ENCODE measurements at regions of chr1 and their contacts with region 1.

Region 1: DNA sequence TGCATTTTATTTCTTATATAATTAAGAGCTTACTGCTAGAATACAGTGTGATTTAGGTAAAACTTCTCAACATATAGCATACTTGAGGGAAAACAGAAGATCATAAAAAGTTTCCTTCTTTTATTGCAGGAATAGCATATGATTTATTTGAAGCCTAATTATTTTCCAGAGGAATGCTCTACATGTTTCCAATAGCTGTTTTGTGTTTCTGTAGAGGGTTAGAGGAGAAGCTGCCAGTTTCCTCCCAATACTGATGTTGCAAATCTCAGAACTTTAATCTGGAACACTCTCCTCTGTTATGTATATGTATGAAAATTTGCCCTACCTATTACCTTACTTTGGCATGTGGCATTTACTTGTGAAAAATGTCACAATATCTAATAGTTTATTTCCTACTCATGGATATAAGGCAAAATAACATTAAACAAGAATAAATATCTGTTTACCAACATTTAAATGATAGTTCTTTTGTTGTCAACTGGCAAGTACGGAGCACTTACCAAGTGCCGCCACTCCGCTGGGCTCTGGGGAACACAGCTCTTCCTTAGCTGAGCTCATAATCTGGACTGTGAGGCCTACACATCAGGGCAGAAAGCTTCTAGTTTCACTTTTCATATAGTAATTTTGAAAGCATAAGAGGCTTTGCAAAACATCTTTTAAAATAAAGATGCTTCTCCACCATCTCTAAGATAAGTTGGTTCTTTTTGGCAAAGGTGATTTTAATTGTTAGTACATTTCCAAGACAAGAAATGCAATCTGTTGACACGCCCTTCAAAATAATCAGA is 239.8 kb upstream of the C1orf105 start:
- DNase-seq: peak; percentile 69
- ATAC-seq: peak; percentile 89
- H3K4me3 Mint-ChIP-seq: peak overlapping the region; percentile 66
- H3K27ac Mint-ChIP-seq: peak overlapping the region; percentile 95
- H3K4me1 Mint-ChIP-seq: peaks cover 42% of the 10 kb centered on the region
- H3K27me3 Mint-ChIP-seq: no peaks in the 10 kb centered on the region

Region 2: GRCh38 chr1:172135076-172135672 is 45.5 kb before region 1 on chr1:
- CTCF ChIA-PET with region 1: interaction called, 3 read pairs
- POLR2A ChIA-PET with region 1: no interaction called
- intact Hi-C with region 1: loop called in 1 of 2 experiments (anchors 2 kb)
- DNase-seq: peak; percentile 25
- ATAC-seq: no peak
- H3K4me3 Mint-ChIP-seq: no peak overlapping the region
- H3K27ac Mint-ChIP-seq: no peak overlapping the region
- H3K4me1 Mint-ChIP-seq: peaks cover 19% of the 10 kb centered on the region
- H3K27me3 Mint-ChIP-seq: no peaks in the 10 kb centered on the region

Region 3: DNA sequence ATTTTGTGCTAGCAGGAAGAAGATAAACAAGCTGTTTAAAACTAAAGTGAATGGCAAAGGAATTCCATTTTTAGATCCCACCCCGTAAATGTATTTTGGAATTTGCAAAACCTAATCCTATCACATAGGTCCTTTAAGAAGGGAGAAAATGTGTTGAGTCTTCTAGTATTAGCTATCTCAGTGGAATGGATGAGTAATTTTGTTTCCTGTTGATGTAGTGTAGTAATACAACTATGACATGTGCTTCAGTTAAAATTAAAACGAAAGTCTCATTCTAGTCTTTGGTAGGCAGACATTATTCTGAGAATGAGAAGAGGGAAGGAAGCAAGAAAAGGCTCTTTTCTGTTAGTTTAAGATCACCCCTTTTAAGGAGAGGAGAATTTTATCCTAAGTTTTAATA is 26.1 kb before region 1 on chr1:
- CTCF ChIA-PET with region 1: no interaction called
- POLR2A ChIA-PET with region 1: no interaction called
- intact Hi-C with region 1: loop called in 1 of 2 experiments (anchors 1 kb)
- DNase-seq: no peak
- ATAC-seq: peak; percentile 100
- H3K4me3 Mint-ChIP-seq: no peak overlapping the region
- H3K27ac Mint-ChIP-seq: peak overlapping the region; percentile 90
- H3K4me1 Mint-ChIP-seq: peaks cover 9% of the 10 kb centered on the region
- H3K27me3 Mint-ChIP-seq: no peaks in the 10 kb centered on the region

Region 4: DNA sequence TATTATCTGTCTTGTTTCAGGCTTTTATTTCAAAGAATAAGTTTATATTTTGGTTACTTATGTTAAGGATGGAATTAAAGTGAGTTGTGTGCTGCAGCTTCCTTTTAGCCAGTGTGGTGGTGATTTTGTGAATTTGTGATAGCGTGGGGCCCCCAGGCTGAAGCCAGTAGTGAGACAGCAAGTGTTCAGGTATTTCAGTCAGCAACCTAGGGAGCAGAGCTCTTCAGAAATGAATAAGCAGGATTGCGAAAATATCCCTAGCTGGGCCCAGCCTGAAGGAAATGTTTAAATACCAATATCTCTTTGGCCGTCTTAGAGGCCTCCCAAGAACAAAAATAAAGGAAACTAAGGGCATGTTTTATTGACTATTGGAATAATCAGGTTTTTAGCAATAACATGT is 89.0 kb after region 1 on chr1:
- CTCF ChIA-PET with region 1: no interaction called
- POLR2A ChIA-PET with region 1: no interaction called
- intact Hi-C with region 1: loop called (anchors 2 kb)
- DNase-seq: peak; percentile 18
- ATAC-seq: peak; percentile 10
- H3K4me3 Mint-ChIP-seq: no peak overlapping the region
- H3K27ac Mint-ChIP-seq: peak overlapping the region; percentile 39
- H3K4me1 Mint-ChIP-seq: peaks cover 41% of the 10 kb centered on the region
- H3K27me3 Mint-ChIP-seq: no peaks in the 10 kb centered on the region

Region 5: DNA sequence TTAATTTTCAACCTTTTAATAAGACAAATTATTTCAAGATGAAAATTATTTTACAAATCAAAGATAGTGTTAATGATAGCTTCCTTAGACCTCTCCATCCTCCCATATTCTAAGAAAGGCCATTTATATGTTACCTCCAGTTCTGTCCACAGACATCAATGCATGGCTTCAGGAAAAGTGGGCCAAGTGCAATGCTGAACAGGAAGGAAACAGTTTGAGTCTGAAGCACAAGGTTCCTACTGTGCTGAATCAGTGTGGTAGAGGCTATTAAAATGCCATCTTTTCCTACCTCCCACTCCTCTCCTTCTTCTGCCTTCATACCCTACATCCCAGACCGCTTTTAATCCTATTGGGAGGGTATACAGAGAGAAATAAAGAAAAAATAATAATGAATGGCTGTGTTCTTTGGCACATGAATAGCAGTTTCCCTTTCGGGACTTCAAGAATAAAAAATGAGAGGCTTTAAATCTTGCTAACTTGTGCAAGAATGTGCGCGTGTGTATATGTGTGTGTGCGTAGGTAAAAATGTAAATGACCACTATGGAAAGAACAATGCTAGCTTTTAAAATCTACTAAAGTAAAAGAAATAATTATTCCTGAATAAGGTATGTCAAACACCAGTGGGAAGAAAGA is 177.2 kb after region 1 on chr1:
- CTCF ChIA-PET with region 1: interaction called, 3 read pairs
- POLR2A ChIA-PET with region 1: no interaction called
- intact Hi-C with region 1: loop called in 1 of 2 experiments (anchors 2 kb)
- DNase-seq: no peak
- ATAC-seq: peak; percentile 6
- H3K4me3 Mint-ChIP-seq: peak overlapping the region; percentile 39
- H3K27ac Mint-ChIP-seq: peak overlapping the region; percentile 34
- H3K4me1 Mint-ChIP-seq: peaks cover 62% of the 10 kb centered on the region
- H3K27me3 Mint-ChIP-seq: peaks cover 2% of the 10 kb centered on the region

Region 6: DNA sequence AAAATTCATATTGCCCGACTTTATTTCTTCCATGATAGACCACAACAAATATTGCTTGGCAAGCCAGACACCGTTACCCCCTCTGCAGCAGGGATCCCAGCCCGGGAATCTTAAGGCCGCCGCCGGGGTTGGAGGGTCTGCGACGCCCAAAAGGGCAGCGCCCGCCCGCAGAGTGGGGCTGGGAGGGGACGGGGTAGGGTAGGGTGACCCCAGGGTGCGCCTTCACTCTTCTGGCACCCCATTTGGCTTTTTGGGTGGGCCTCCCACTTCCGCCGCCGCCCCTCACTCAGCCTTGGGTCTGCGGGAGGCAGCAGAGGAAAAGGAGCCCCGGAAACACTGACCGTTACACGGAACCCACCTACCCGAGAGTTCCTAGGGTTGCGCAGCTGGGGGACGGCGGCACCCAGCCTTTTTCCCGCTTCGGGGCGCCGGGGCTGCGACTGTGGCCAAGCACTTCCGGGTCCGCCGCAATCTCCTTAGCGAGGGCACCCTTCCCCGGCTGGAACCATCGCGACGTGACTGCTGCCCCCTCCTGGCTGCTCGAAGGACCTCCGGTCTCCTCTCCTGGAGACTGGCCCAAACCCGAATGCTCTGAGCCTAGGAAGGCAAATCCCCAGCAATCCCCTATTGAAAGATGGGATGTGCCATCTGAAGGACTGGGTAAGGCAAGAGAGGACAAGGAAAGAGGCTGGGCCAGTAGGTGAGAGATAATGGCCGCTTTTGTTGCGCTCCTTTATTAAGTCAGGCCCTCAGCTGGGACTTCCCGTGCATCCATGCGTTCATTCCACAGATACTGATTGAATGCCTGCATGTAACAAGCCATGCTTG is 263.1 kb after region 1 on chr1 and contains the start of gene PIGC:
- CTCF ChIA-PET with region 1: interaction called, 3 read pairs
- POLR2A ChIA-PET with region 1: no interaction called
- intact Hi-C with region 1: loop called in 1 of 2 experiments (anchors 1 kb)
- DNase-seq: peak; percentile 97
- ATAC-seq: peak; percentile 99
- H3K4me3 Mint-ChIP-seq: peak within 1 kb of the TSS; percentile 85
- H3K27ac Mint-ChIP-seq: peak within 1 kb of the TSS; percentile 91
- H3K4me1 Mint-ChIP-seq: peaks cover 31% of the 10 kb centered on the region
- H3K27me3 Mint-ChIP-seq: no peaks in the 10 kb centered on the region
- total RNA-seq, gene PIGC: 14.7 to 17.1 TPM